ENCODE measurements at regions of chr12 and their contacts with region 1.

Region 1: DNA sequence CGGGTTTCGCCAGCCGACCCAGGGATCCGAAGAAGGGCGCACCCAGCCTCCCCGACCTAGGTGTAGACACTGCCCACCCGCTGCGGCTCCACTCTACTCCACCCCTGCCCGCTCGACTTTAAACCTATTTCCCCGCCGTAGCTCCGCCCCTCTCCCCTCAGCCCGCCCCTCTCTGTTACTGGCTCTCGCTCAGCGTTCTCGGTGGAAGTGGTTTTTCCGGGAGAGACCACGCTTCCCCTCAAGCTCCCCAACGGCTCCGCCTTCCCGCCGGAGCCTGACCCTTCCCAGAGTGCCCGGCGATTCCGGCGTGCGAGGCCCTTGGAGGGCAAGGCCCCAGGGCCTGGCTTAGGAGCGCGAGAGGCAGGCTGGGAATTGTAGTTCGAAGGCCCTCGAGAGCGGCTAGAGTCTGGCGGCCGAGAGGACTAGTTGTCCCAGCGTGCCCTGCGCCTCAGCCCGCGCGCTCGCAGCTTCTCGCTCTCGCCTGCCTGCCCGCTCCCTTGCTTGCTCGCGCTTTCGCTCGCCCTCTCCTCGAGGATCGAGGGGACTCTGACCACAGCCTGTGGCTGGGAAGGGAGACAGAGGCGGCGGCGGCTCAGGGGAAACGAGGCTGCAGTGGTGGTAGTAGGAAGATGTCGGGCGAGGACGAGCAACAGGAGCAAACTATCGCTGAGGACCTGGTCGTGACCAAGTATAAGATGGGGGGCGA is at the start of gene PA2G4:
- DNase-seq: peak; percentile 99
- H3K4me3 Mint-ChIP-seq: peak within 1 kb of the TSS; percentile 92
- H3K27ac Mint-ChIP-seq: peak within 1 kb of the TSS; percentile 95
- H3K4me1 Mint-ChIP-seq: peaks cover 51% of the 10 kb centered on the region
- H3K27me3 Mint-ChIP-seq: no peaks in the 10 kb centered on the region
- total RNA-seq, gene PA2G4: 356 and 364 TPM in 2 replicates

Region 2: DNA sequence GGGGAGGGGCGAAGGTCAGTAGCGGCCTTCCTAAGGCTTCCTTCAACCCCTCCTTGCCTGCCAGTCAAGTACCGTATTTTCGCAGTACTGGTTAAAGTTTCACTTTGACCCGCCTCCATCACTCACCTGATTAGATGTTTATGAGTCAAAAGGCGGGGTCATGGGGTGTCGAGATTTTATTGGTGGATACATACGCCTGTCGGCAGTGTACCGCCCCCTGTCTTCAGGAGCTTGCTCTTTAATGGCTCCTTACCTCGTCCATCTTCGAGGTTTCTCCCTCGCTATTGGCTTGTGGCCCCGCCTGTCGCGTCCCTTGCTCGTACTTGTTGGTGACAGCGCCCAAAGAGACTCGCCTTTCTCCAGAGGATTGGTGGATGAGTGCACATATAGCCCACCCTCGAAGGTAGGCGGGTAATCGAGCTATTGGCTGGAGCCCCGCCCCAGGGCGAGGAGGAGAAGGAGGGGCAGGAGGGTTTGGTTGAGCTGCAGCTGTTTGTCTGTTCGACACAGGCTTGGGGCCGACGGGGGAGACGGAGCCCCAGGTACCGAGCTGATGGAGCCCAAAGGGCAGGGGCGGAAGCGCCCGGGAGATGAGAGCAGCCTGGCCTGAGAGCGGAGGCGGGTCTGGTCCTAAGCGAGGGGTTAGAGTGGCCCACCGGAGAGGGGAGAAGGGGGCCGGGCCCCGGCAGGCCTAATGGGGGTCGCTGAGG is 130.5 kb before region 1 on chr12 and contains the start of gene RAB5B:
- intact Hi-C with region 1: loop called (anchors 1 kb)
- DNase-seq: peak; percentile 99
- H3K4me3 Mint-ChIP-seq: no peak within 1 kb of the TSS
- H3K27ac Mint-ChIP-seq: no peak within 1 kb of the TSS
- H3K4me1 Mint-ChIP-seq: peaks cover 26% of the 10 kb centered on the region
- H3K27me3 Mint-ChIP-seq: no peaks in the 10 kb centered on the region
- total RNA-seq, gene RAB5B: 47.9 and 51.0 TPM in 2 replicates

Region 3: DNA sequence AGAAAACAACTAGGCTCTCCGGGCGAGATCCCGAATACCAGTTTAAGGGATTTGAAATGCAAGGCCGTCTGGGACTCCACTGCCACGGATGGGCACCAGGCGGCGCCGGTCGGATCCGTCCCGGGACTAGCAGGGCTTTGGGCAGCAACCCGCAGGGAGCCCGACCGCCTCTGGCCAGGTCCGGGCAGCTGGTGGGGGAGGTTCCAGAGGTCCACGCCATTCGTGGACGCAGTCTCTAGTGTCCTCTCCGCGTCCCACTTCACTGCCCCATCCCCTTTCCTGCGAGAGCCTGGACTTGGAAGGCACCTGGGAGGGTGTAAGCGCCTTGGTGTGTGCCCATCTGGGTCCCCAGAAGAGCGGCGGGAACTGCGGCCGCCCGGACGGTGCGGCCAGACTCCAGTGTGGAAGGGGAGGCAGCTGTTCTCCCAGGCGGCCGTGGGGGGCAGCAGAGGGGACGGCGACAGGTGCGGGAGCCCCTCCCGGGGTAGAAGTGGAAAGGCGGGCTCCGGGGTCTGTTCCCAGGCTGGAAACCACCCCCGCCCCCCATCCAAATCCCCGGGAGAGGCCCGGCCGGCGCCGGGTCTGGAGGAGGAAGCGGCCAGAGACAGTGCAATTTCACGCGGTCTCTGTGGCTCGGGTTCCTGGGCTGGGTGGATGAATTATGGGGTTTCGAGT is 25.1 kb before region 1 on chr12:
- intact Hi-C with region 1: loop called (anchors 1 kb)
- DNase-seq: peak; percentile 37
- H3K4me3 Mint-ChIP-seq: peak overlapping the region; percentile 68
- H3K27ac Mint-ChIP-seq: no peak overlapping the region
- H3K4me1 Mint-ChIP-seq: peaks cover 2% of the 10 kb centered on the region
- H3K27me3 Mint-ChIP-seq: peaks cover 31% of the 10 kb centered on the region

Region 4: DNA sequence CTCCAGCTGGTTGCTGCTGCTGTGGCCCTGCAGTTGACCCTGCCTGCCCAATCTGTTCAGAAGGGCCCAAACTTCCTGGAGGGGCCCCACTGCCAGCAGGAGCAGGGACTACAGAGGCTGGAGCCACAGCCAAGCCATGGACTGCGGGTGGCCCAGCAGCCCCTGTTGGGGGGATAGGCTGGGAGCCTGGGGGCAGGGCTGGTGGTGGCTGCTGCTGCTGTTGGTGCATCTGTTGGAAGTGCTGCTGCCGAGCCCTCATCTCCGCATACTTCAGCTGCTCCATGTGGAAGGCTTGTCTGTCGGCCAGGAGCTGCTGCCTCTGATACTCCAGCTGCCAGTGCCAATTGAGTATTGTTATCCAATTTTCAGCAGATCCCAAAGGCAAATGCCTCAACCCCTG is 61.1 kb after region 1 on chr12:
- intact Hi-C with region 1: no loop called
- DNase-seq: no peak
- H3K4me3 Mint-ChIP-seq: no peak overlapping the region
- H3K27ac Mint-ChIP-seq: no peak overlapping the region
- H3K4me1 Mint-ChIP-seq: peaks cover 18% of the 10 kb centered on the region
- H3K27me3 Mint-ChIP-seq: no peaks in the 10 kb centered on the region

Region 5: DNA sequence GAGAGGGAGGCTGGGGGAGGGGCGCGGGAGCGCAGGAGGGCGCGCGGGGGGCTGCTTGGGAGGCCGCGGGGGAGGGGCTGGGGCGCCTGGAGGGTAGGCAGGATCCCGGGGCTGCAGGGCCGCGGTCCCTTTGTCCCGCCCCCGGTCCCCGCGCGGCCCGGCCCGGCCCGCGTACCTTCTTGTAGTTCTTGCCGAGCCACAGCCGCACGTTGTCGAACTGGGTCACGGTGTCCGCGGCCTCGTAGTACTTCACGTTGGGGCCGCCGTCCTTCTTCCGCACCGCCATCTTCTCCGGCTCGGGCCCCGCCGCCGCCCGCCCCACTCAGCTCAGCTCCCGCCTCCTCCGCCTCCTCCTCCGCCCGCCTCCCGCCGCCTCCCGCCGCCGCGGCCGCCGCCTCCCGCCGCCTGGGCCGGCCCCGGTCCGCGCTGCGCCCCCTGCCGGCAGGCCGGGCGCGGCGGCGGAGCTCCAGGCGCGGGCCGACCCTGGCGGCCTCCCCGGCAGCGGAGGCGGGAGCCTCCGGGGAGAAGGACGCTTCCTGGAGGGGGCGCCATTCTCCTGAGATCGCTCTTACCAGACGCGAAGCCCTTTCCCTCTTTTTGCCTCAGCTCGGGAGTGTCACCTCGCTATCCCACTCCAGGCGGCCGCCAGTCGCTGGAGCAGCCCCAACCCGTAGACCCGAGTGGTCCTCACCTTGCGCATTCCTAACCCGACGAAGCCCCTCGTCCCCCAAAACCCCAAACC is 85.1 kb after region 1 on chr12 and contains the start of gene SMARCC2:
- intact Hi-C with region 1: no loop called
- DNase-seq: peak; percentile 81
- H3K4me3 Mint-ChIP-seq: peak within 1 kb of the TSS; percentile 98
- H3K27ac Mint-ChIP-seq: peak within 1 kb of the TSS; percentile 98
- H3K4me1 Mint-ChIP-seq: peaks cover 38% of the 10 kb centered on the region
- H3K27me3 Mint-ChIP-seq: no peaks in the 10 kb centered on the region
- total RNA-seq, gene SMARCC2: 131 and 136 TPM in 2 replicates

Region 6: GRCh38 chr12:56359851-56360767 is 255.8 kb after region 1 on chr12 and contains the start of gene STAT2:
- intact Hi-C with region 1: loop called (anchors 1 kb)
- DNase-seq: peak; percentile 100
- H3K4me3 Mint-ChIP-seq: peak within 1 kb of the TSS; percentile 89
- H3K27ac Mint-ChIP-seq: peak within 1 kb of the TSS; percentile 90
- H3K4me1 Mint-ChIP-seq: peaks cover 24% of the 10 kb centered on the region
- H3K27me3 Mint-ChIP-seq: no peaks in the 10 kb centered on the region
- total RNA-seq, gene STAT2: 70.3 and 75.0 TPM in 2 replicates

Measured in activated T-helper 2 cell treated with anti-CD3 and anti-CD28 coated beads, Interferon-gamma antibody, Interleukin-2, Interleukin-4, amounts not matched to agents 10 μg/mL and 5 μg/mL and 100 μg/mL, durations not matched to agents 14 hours and 24 hours and 36 hours (primary cell).